Activated CD4-positive, alpha-beta T cell treated with anti-CD3 and anti-CD28 coated beads for 36 hours (primary cell): ENCODE measurements at regions of chr1 and their contacts with region 1.

Region 1: DNA sequence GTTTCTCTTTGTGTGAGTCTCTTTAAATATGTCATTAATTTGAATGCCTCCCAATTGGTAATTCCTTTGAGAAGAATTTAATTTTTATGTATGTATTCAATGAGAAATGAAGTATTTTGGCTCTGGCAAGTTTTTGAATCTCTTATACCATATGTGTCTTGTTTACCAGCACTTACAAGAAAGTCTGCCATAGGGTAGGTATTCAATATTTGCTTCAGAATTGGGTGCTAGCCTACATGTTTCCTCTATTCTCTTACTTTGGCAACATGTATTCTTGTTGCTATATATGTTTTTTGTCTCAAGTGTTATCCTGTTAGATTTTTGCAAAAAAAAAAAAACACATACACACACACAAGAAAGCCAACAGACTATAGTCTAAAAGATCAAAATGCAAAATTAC is 350.5 kb upstream of the PRMT6 start:
- DNase-seq: no peak
- ATAC-seq: no peak
- H3K4me3 Mint-ChIP-seq: no peak overlapping the region
- H3K27ac Mint-ChIP-seq: no peak overlapping the region
- H3K4me1 Mint-ChIP-seq: no peaks in the 10 kb centered on the region
- H3K27me3 Mint-ChIP-seq: no peaks in the 10 kb centered on the region

Region 2: DNA sequence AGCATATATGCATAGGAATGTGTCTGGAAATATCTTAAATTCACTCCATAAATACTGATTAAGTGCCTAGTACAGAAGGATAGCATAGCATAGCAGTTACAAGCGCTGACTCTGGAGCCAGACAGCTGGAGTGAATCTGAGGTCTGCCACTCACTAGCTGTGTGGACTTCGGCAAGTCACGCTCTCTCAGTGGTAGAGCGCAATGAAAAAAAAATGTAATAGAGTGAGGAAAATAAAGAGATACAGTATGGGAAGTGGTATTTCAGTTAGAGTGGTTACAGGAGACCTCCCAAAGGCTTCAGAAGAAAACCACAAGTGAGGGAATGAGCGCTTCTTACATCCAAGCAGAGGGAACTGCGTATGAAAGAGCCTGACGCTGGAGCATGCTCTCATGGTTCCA is 11.6 kb after region 1 on chr1:
- CTCF ChIA-PET with region 1: no interaction called
- POLR2A ChIA-PET with region 1: no interaction called
- intact Hi-C with region 1: loop called in 1 of 2 experiments (anchors 1 kb)
- DNase-seq: no peak
- ATAC-seq: no peak
- H3K4me3 Mint-ChIP-seq: no peak overlapping the region
- H3K27ac Mint-ChIP-seq: no peak overlapping the region
- H3K4me1 Mint-ChIP-seq: no peaks in the 10 kb centered on the region
- H3K27me3 Mint-ChIP-seq: no peaks in the 10 kb centered on the region

Region 3: GRCh38 chr1:106818175-106818574 is 112.2 kb after region 1 on chr1:
- CTCF ChIA-PET with region 1: no interaction called
- POLR2A ChIA-PET with region 1: no interaction called
- intact Hi-C with region 1: no loop called
- DNase-seq: no peak
- ATAC-seq: no peak
- H3K4me3 Mint-ChIP-seq: no peak overlapping the region
- H3K27ac Mint-ChIP-seq: no peak overlapping the region
- H3K4me1 Mint-ChIP-seq: no peaks in the 10 kb centered on the region
- H3K27me3 Mint-ChIP-seq: no peaks in the 10 kb centered on the region